RWPE1 (cell line): ENCODE measurements at regions of chr20 and their contacts with region 1.

Region 1: GRCh38 chr20:45971675-45972499 is at the start of gene ZNF335:
- DNase-seq: peak; percentile 100
- H3K27ac ChIP-seq: peak within 1 kb of the TSS; percentile 99
- CTCF ChIP-seq: no peak

Region 2: DNA sequence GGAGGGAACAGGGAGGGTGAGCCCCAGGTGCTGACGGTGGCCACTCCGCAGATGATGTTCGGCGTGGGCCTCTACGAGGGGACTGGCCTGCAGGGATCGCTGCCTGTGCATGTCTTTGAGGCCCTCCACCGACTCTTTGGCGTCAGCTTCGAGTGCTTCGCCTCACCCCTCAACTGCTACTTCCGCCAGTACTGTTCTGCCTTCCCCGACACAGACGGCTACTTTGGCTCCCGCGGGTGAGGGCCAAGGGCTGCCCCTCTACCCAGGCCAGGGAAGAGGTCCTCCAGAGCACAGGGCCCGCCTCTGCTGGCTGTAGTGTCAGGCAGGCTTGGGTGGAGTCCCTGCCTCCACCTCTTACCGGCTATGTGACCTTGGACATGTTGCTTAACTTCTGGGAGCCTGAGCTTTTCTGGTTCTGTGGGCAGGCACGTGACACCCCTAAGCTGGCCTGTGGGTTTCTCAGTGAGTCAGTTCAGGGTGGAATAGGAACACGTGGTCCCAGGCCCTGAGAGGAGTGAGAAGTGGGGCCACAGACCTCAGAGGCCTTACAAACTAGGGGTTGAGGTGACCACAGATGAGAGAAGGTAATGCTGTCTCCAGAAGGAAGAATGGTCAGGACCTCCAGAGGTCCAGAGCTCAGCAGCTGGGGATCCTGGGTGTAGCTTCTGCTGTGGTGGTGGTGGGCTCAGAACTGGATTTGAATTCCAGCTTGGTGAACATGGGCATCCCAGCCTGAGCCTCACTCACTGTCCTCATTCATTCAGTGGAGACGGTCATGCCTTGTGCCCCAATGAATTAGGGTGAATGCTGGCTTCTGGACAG is 25.5 kb before region 1 on chr20:
- CTCF ChIA-PET with region 1: interaction called, 19 read pairs
- POLR2A ChIA-PET with region 1: interaction called, 3 read pairs
- DNase-seq: peak; percentile 53
- H3K27ac ChIP-seq: peak overlapping the region; percentile 86
- CTCF ChIP-seq: no peak

Region 3: GRCh38 chr20:45957081-45957941 is 14.6 kb before region 1 on chr20:
- CTCF ChIA-PET with region 1: interaction called, 15 read pairs
- POLR2A ChIA-PET with region 1: interaction called, 12 read pairs
- DNase-seq: no peak
- H3K27ac ChIP-seq: peak overlapping the region; percentile 36
- CTCF ChIP-seq: no peak

Region 4: DNA sequence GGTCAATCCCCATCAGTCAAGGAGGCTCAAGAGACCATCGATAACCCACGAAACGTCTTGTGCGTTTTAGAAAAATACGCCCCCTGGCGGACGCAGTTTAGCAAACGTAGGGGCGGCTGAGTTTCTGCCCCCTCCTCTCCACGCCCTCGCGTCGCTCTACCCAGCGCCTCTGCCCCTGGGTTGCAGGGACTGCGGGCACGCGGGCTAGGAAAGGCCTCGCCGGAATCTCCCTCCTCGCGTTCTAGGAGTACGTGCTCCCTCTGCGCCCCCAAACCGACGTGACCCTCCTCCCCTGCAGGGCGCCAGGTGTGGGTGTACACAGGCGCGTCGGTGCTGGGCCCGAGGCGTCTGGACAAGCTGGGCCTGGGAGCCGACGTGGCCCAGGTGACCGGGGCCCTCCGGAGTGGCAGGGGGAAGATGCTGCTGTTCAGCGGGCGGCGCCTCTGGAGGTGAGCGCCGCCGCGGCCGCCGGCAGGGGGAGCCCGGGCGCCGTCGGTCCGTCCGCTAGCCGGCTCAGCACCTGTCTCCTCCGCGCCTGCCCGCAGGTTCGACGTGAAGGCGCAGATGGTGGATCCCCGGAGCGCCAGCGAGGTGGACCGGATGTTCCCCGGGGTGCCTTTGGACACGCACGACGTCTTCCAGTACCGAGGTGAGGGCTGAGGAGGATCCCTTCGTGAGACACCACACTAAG is 42.1 kb after region 1 on chr20:
- CTCF ChIA-PET with region 1: interaction called, 79 read pairs
- POLR2A ChIA-PET with region 1: no interaction called
- DNase-seq: peak; percentile 83
- H3K27ac ChIP-seq: no peak overlapping the region
- CTCF ChIP-seq: peak; percentile 100